K562 (cell line): ENCODE measurements at regions of chr7 and their contacts with region 1.

Region 1: DNA sequence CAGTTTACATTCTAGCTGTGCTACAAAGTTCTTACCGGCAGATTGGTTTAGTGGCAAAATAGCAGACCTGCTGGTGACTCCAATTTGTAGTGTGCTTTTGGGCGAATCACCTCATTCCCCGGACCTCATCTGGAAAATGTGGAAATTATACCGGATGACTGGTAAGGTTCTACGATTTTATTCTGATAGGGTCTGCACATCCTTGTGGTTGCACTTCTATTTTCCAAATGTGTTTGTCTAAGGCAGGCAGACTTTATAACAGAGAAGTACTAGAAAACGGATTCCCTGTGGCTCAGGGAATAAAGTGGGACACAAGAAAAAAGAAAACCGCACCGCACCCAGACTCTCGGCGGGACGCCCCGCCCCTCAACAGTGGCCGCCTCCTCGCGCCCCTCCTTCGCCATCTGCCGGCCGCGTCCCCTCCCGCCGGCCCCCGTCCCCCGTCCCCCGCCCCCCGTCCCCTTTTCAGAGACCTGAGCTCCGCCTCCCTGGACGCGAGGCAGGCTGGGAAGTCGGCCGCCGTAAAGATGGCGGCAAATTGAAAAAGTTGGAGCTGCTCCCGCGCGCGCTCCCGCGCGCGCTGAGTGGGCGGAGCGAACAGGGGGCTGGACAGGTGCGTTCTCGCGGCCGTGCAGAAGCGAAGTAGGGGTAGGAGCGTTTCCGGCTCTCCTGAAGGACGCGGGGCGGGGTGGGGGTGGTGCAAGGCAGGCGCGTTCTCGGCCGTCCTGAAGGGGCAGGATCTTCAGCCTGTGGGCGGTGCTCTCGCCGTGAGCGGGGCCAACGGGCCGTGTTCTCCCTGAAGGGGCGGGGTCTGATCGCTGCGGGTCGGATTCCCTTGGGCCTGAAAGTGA is 531 bp upstream of the CCM2 start:
- DNase-seq: peak; percentile 88 to 99 (median 92)
- ATAC-seq: peak; percentile 91
- H3K4me3 ChIP-seq: peak overlapping the region; percentile 69
- H3K27ac ChIP-seq: peak overlapping the region; percentile 97
- H3K4me1 ChIP-seq: peaks cover 22 to 39% of the 10 kb centered on the region in 2 experiments
- H3K27me3 ChIP-seq: no peaks in the 10 kb centered on the region
- CTCF ChIP-seq: no peak
- EP300 ChIP-seq: peak; percentile 10; the same call in 1 of the 2 replicates
- POLR2A ChIP-seq: peak; percentile 87
- RAD21 ChIP-seq: no peak

Region 2: GRCh38 chr7:44521347-44522095 is 477.9 kb before region 1 on chr7:
- CTCF ChIA-PET with region 1: no interaction called
- POLR2A ChIA-PET with region 1: no interaction called
- in situ Hi-C with region 1: no loop called
- intact Hi-C with region 1: no loop called
- DNase-seq: no peak
- ATAC-seq: no peak; the same call in 2 of the 3 replicates
- H3K4me3 ChIP-seq: no peak overlapping the region
- H3K27ac ChIP-seq: no peak overlapping the region
- H3K4me1 ChIP-seq: peaks cover 0 to 6% of the 10 kb centered on the region in 2 experiments; a peak in 2 of 5 replicates
- H3K27me3 ChIP-seq: peaks cover 6 to 38% of the 10 kb centered on the region in 2 experiments; a peak in 4 of 5 replicates
- CTCF ChIP-seq: no peak
- EP300 ChIP-seq: no peak
- POLR2A ChIP-seq: no peak
- RAD21 ChIP-seq: no peak

Region 3: GRCh38 chr7:44980393-44981034 is 19.0 kb before region 1 on chr7:
- CTCF ChIA-PET with region 1: no interaction called
- POLR2A ChIA-PET with region 1: interaction called, 14 read pairs
- in situ Hi-C with region 1: no loop called
- intact Hi-C with region 1: loop called (anchors 2 kb)
- DNase-seq: no peak
- ATAC-seq: no peak
- H3K4me3 ChIP-seq: no peak overlapping the region
- H3K27ac ChIP-seq: peak overlapping the region; percentile 24; the same call in 1 of the 3 replicates
- H3K4me1 ChIP-seq: peaks cover 29 to 40% of the 10 kb centered on the region in 2 experiments; a peak in 4 of 5 replicates
- H3K27me3 ChIP-seq: no peaks in the 10 kb centered on the region
- CTCF ChIP-seq: no peak
- EP300 ChIP-seq: no peak
- POLR2A ChIP-seq: no peak
- RAD21 ChIP-seq: no peak

Region 4: GRCh38 chr7:44986218-44987053 is 13.0 kb before region 1 on chr7:
- CTCF ChIA-PET with region 1: no interaction called
- POLR2A ChIA-PET with region 1: interaction called, 14 read pairs
- in situ Hi-C with region 1: no loop called
- intact Hi-C with region 1: loop called (anchors 1 kb)
- DNase-seq: peak; percentile 81 to 98 (median 86)
- ATAC-seq: peak; percentile 85
- H3K4me3 ChIP-seq: peak overlapping the region; percentile 98
- H3K27ac ChIP-seq: peak overlapping the region; percentile 97
- H3K4me1 ChIP-seq: peaks cover 22 to 38% of the 10 kb centered on the region in 2 experiments; a peak in 4 of 5 replicates
- H3K27me3 ChIP-seq: no peaks in the 10 kb centered on the region
- CTCF ChIP-seq: no peak
- EP300 ChIP-seq: no peak; the same call in none of the 2 replicates
- POLR2A ChIP-seq: peak; percentile 99
- RAD21 ChIP-seq: 0 out of 4 replicates have a peak, but pooled peaks of 1 of the 2 experiments have one; percentile 6